ENCODE measurements at regions of chr5 and their contacts with region 1.

Region 1: GRCh38 chr5:171342362-171343111 is 33.5 kb downstream of the TLX3 start:
- DNase-seq: peak; percentile 64
- ATAC-seq: peak; percentile 95
- H3K4me3 ChIP-seq: no peak overlapping the region
- H3K27ac ChIP-seq: no peak overlapping the region
- H3K4me1 ChIP-seq: peaks cover 0 to 5% of the 10 kb centered on the region in 2 experiments; a peak in 1 of 4 replicates
- H3K27me3 ChIP-seq: no peaks in the 10 kb centered on the region
- CTCF ChIP-seq: peak; percentile 69 to 85 (median 81)
- POLR2A ChIP-seq: no peak
- RAD21 ChIP-seq: peak; percentile 84

Region 2: GRCh38 chr5:170747851-170748250 is 594.7 kb before region 1 on chr5:
- CTCF ChIA-PET with region 1: interaction called, 6 read pairs
- POLR2A ChIA-PET with region 1: no interaction called
- RAD21 ChIA-PET with region 1: no interaction called
- intact Hi-C with region 1: loop called (anchors 1 kb)
- DNase-seq: peak; percentile 16
- ATAC-seq: peak; percentile 35; the same call in 1 of the 2 replicates
- H3K4me3 ChIP-seq: no peak overlapping the region
- H3K27ac ChIP-seq: no peak overlapping the region
- H3K4me1 ChIP-seq: peaks cover 0 to 10% of the 10 kb centered on the region in 2 experiments; a peak in 1 of 4 replicates
- H3K27me3 ChIP-seq: peaks cover 13% of the 10 kb centered on the region; the same call in 1 of the 2 replicates
- CTCF ChIP-seq: peak; percentile 40 to 68 (median 56); a peak in 5 of 6 replicates
- POLR2A ChIP-seq: no peak
- RAD21 ChIP-seq: peak; percentile 37; the same call in 1 of the 2 replicates

Region 3: GRCh38 chr5:170809551-170809950 is 533.0 kb before region 1 on chr5:
- CTCF ChIA-PET with region 1: interaction called, 21 read pairs
- POLR2A ChIA-PET with region 1: no interaction called
- RAD21 ChIA-PET with region 1: no interaction called
- intact Hi-C with region 1: loop called (anchors 2 kb)
- DNase-seq: peak; percentile 34
- ATAC-seq: peak; percentile 90
- H3K4me3 ChIP-seq: no peak overlapping the region
- H3K27ac ChIP-seq: no peak overlapping the region
- H3K4me1 ChIP-seq: no peaks in the 10 kb centered on the region
- H3K27me3 ChIP-seq: no peaks in the 10 kb centered on the region
- CTCF ChIP-seq: peak in 2 of 3 experiments; percentile 39 to 51; a peak in 3 of 6 replicates
- POLR2A ChIP-seq: no peak
- RAD21 ChIP-seq: peak; percentile 78

Region 4: GRCh38 chr5:170986598-170986997 is 355.9 kb before region 1 on chr5:
- CTCF ChIA-PET with region 1: interaction called, 3 read pairs
- POLR2A ChIA-PET with region 1: no interaction called
- RAD21 ChIA-PET with region 1: no interaction called
- intact Hi-C with region 1: loop called (anchors 5 kb)
- DNase-seq: no peak
- ATAC-seq: no peak
- H3K4me3 ChIP-seq: no peak overlapping the region
- H3K27ac ChIP-seq: no peak overlapping the region
- H3K4me1 ChIP-seq: no peaks in the 10 kb centered on the region
- H3K27me3 ChIP-seq: no peaks in the 10 kb centered on the region
- CTCF ChIP-seq: no peak; a peak in 1 of 6 replicates
- POLR2A ChIP-seq: no peak
- RAD21 ChIP-seq: peak; percentile 27; the same call in 1 of the 2 replicates

Region 5: DNA sequence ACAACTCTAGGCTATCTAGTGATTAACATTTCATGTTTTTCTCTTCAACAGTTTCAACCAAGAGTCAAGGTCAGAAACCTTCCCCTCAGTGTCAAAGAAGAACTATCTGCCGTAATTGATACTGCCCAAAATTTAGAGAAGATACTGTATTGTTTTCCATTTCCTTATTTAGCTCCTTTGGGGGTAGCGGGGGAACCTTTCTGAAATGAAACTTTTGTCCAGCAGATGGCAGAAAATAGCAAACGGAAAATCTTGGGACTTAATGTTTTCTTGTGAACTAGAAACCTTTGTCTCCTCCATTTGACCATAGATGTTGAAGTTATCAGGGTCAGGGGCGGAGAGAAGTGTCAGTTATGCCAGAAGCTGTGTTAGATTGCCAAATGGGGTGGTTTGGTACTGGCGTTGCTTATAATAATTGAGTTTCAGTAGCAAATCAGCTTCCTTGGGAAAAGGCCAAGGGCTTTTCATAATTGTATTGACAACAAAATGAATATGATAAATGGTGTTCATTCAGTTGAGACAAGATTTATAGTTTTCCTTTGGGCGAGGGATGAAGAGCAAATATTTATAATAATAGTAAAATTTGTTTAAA is 135.2 kb before region 1 on chr5:
- CTCF ChIA-PET with region 1: interaction called, 50 read pairs
- POLR2A ChIA-PET with region 1: no interaction called
- RAD21 ChIA-PET with region 1: interaction called in 1 of 2 experiments, 12 read pairs
- intact Hi-C with region 1: loop called (anchors 1 kb)
- DNase-seq: peak; percentile 43
- ATAC-seq: peak; percentile 85
- H3K4me3 ChIP-seq: no peak overlapping the region
- H3K27ac ChIP-seq: no peak overlapping the region
- H3K4me1 ChIP-seq: 0 out of 4 replicates have a peak, but pooled peaks cover 0 to 3% of the 10 kb centered on the region in 2 experiments
- H3K27me3 ChIP-seq: no peaks in the 10 kb centered on the region
- CTCF ChIP-seq: peak; percentile 56 to 79 (median 76)
- POLR2A ChIP-seq: no peak
- RAD21 ChIP-seq: peak; percentile 73

Region 6: DNA sequence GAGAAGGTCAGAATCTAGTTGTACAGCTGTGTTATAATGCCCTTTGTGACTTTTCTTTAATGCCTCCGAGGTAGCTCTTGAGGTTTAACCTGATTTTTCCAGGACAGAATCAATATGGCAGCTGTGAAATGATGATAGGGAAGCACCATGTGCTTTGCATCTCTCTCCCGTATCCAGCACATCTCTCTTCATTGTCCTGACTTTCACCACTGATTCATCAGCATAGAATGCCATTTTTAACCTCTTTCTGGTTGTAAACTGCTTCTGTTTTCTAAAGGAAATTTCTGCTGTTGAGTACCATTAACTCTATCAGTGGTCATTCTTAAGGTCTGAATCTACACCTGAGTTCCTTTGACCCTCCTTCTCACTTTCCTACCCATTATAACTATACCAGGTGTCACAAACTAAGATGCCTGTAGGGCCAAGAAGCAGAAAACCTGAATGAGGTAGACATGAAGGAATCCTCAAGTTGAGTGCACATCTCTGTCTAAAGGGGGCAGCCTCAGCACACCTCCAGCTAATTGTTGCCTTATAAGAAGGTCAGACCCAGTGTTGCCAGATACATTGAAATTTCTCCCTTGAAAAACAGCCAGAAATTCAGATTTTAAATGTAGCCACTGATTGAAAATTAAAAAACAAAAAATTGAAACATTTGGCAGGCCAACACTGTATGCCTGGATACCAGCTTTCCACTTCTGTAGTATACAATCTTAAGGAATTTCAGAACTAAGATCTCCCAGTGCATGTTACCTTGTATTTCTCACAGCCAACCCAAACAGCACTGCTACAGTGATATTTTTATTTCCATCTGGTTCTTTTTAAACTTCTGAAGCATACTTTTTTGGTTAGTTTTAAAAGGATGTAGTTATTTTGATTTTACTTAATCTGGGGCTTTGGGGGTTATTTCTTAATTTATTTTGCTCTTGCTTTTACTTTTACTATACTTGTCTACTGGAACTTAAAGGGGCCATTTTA is 69.3 kb before region 1 on chr5:
- CTCF ChIA-PET with region 1: interaction called, 22 read pairs
- POLR2A ChIA-PET with region 1: no interaction called
- RAD21 ChIA-PET with region 1: interaction called in 1 of 2 experiments, 6 read pairs
- intact Hi-C with region 1: loop called (anchors 1 kb)
- DNase-seq: peak; percentile 44
- ATAC-seq: peak; percentile 97
- H3K4me3 ChIP-seq: no peak overlapping the region
- H3K27ac ChIP-seq: no peak overlapping the region
- H3K4me1 ChIP-seq: no peaks in the 10 kb centered on the region
- H3K27me3 ChIP-seq: no peaks in the 10 kb centered on the region
- CTCF ChIP-seq: peak; percentile 61 to 63 (median 63)
- POLR2A ChIP-seq: no peak
- RAD21 ChIP-seq: peak; percentile 75

Measured in HCT116 (cell line).